PC-9 (cell line): ENCODE measurements at regions of chr9 and their contacts with region 1.

Region 1: DNA sequence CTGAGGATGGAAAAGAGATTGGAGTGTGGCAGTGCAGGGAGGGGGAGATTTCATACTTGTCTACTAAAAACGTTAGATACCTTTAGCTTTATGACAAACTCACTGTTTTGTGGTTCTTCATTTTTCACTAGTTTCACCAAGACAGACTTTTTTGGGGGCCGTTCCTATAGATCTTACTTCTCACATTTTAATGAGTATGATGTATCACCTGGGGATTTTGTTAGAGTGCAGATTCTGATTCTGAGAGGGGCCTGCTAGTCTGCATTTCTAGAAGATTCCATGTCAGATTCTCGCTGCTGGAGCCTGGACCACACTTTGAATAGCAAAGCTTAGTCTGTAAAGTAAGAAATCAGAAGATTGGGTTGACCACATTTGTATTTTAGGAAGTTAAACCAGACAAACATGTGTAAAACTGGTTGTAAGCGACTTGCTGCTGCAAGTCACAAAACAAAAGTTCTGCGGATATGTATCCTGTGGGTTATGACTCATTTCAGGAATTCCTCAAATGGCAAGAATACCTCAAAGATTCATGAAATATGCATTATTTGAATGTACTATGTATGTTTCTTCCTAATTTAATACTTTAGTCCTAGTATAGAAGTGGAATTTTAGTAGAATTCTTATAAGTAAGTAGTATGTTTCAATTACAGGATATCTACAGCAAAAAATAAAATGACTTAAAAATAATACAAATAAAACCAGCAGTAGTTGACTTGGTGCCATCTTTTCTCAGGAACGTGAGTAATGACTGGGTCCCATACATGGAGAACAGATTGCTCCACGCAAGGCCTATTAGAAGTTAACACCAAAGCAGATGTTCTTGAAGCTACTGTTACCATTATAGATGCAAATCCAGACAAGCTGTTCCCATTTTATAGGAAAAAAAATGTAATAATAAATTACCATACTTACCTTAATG is 27.8 kb downstream of the NFIL3 start:
- DNase-seq: peak; percentile 8 to 75
- H3K4me3 ChIP-seq: no peak overlapping the region
- H3K27ac ChIP-seq: peak overlapping the region; percentile 31
- H3K4me1 ChIP-seq: peaks cover 19% of the 10 kb centered on the region
- H3K27me3 ChIP-seq: no peaks in the 10 kb centered on the region
- CTCF ChIP-seq: no peak

Region 2: GRCh38 chr9:91407580-91408318 is 11.9 kb after region 1 on chr9:
- CTCF ChIA-PET with region 1: no interaction called
- POLR2A ChIA-PET with region 1: interaction called, 10 read pairs
- intact Hi-C with region 1: no loop called
- DNase-seq: no peak
- H3K4me3 ChIP-seq: no peak overlapping the region
- H3K27ac ChIP-seq: no peak overlapping the region
- H3K4me1 ChIP-seq: peaks cover 23% of the 10 kb centered on the region
- H3K27me3 ChIP-seq: no peaks in the 10 kb centered on the region
- CTCF ChIP-seq: no peak